ENCODE measurements at regions of chr12 and their contacts with region 1.

Region 1: DNA sequence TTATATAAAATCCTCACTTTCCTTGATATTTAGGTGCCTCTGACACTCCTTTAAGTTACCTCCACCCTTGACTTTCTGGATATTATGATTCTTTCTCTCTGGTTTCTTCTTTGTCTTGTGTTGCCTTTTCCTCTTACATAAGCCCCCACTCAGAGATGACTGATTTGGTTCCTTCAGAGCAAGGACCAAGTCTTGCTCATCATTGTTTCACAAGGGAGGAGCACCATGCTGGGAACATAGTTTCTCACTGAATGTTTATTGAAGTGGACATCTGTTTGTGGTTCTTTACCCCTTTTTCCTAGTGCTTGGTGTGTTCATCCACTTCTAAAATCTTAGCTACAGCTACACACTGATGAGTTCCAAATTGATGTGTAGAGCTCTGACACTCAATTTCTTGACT is 161.3 kb upstream of the PTPRQ start:
- ATAC-seq: no peak
- H3K4me3 ChIP-seq: no peak overlapping the region
- H3K27ac ChIP-seq: no peak overlapping the region
- H3K4me1 ChIP-seq: no peaks in the 10 kb centered on the region

Region 2: GRCh38 chr12:79920421-79921238 is 362.1 kb before region 1 on chr12:
- in situ Hi-C with region 1: no loop called
- ATAC-seq: no peak
- H3K4me3 ChIP-seq: no peak overlapping the region
- H3K27ac ChIP-seq: no peak overlapping the region
- H3K4me1 ChIP-seq: no peaks in the 10 kb centered on the region

Region 3: GRCh38 chr12:80195074-80195726 is 87.6 kb before region 1 on chr12:
- in situ Hi-C with region 1: loop called in 1 of 9 experiments (anchors 10 kb)
- ATAC-seq: peak in 4 of 8 experiments; percentile 59 to 78 (median 68)
- H3K4me3 ChIP-seq: no peak overlapping the region
- H3K27ac ChIP-seq: no peak overlapping the region
- H3K4me1 ChIP-seq: peaks cover 0 to 5% of the 10 kb centered on the region in 2 donors

Region 4: GRCh38 chr12:80321649-80322048 is 38.9 kb after region 1 on chr12:
- in situ Hi-C with region 1: no loop called
- ATAC-seq: peak in 4 of 8 experiments; percentile 13 to 84 (median 74)
- H3K4me3 ChIP-seq: no peak overlapping the region
- H3K27ac ChIP-seq: no peak overlapping the region
- H3K4me1 ChIP-seq: no peaks in the 10 kb centered on the region

Region 5: GRCh38 chr12:80422550-80422949 is 139.8 kb after region 1 on chr12:
- in situ Hi-C with region 1: no loop called
- ATAC-seq: peak in 3 of 8 experiments; percentile 55 to 72 (median 63)
- H3K4me3 ChIP-seq: no peak overlapping the region
- H3K27ac ChIP-seq: no peak overlapping the region
- H3K4me1 ChIP-seq: peaks cover 0 to 3% of the 10 kb centered on the region in 2 donors

Measured in motor neuron (in vitro differentiated cells).